PC-3 (cell line): ENCODE measurements at regions of chr13 and their contacts with region 1.

Region 1: DNA sequence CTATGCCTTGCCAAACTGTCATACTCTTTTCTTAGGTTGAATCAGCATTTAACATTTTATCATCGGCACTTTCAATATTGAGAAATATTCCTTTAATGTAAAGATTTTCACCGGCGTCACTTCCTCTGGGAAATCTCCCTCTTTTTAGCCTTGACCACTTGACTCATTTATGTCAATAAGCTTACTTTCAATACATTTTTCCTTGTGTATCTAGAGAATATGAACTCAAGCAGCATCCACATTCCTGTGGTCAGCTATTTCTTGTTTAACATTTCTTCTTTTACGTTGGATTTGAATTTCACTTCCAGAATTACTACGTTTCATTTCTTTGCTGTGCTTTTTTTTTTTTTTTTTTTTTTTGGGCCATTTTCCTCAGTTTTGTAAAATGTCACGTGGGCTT is 271.2 kb upstream of the HTR2A start:
- DNase-seq: peak; percentile 78
- ATAC-seq: peak; percentile 94
- H3K4me3 ChIP-seq: peak overlapping the region; percentile 63
- H3K27ac ChIP-seq: peak overlapping the region; percentile 95
- H3K4me1 ChIP-seq: peaks cover 21% of the 10 kb centered on the region
- H3K27me3 ChIP-seq: no peaks in the 10 kb centered on the region
- CTCF ChIP-seq: no peak

Region 2: GRCh38 chr13:46983881-46984280 is 184.2 kb before region 1 on chr13:
- CTCF ChIA-PET with region 1: no interaction called
- POLR2A ChIA-PET with region 1: no interaction called
- intact Hi-C with region 1: loop called (anchors 5 kb)
- DNase-seq: peak; percentile 84
- ATAC-seq: peak; percentile 100
- H3K4me3 ChIP-seq: no peak overlapping the region
- H3K27ac ChIP-seq: peak overlapping the region; percentile 90
- H3K4me1 ChIP-seq: peaks cover 21% of the 10 kb centered on the region
- H3K27me3 ChIP-seq: no peaks in the 10 kb centered on the region
- CTCF ChIP-seq: no peak

Region 3: DNA sequence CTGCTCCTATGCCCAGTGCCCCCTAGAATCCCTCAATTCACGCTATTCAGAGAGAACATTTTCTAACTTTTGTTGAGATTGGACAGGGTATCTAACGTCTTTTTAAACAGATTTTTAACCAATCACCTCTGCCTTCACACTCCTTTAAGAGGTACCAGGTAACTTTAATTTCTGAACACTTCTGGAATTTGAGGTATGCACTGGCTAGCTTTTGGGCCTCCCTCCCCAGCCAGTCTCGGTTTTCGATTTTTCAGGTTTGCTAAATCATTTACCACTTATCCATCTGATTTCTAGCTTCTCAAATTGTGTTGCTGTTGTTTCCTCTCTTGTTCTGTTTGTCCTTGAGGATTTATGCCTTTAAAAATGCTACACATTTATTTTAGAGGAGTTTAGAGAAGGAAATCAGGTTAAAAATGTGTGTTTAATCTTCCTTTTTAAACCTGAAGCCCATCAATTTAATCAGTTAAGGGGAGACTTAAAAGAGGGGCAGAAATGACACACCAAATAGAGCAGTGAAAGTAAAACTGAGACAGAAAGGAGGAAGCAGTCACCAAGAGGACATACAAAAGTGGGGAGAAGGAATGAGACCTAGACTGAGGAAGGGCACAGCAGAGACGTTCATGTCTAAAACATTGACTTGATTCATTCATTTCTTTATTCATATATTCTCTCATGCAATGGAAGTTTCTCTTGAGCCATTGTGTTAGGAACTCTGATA is 131.6 kb before region 1 on chr13:
- CTCF ChIA-PET with region 1: no interaction called
- POLR2A ChIA-PET with region 1: no interaction called
- intact Hi-C with region 1: loop called (anchors 10 kb)
- DNase-seq: no peak
- ATAC-seq: no peak
- H3K4me3 ChIP-seq: no peak overlapping the region
- H3K27ac ChIP-seq: no peak overlapping the region
- H3K4me1 ChIP-seq: peaks cover 34% of the 10 kb centered on the region
- H3K27me3 ChIP-seq: no peaks in the 10 kb centered on the region
- CTCF ChIP-seq: no peak

Region 4: DNA sequence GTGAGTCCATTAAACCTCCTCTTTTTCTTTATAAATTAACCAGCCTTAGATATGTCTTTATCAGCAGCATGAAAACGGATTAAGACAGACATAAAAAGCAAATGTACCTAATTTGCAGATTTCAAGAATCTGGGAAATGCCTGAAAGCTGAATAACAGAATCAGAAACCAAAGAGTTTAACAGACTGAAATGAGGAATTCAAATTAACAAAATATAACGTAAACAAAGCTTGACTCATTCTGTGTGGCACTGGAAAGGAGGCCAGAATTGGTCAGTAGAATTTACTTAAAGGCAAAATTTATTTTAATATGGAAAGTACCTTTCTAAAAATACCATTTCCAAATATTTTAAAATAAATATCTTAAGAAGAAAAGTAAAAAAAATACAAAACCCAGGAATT is 269.3 kb after region 1 on chr13:
- CTCF ChIA-PET with region 1: no interaction called
- POLR2A ChIA-PET with region 1: interaction called, 25 read pairs
- intact Hi-C with region 1: no loop called
- DNase-seq: no peak
- ATAC-seq: no peak
- H3K4me3 ChIP-seq: no peak overlapping the region
- H3K27ac ChIP-seq: no peak overlapping the region
- H3K4me1 ChIP-seq: no peaks in the 10 kb centered on the region
- H3K27me3 ChIP-seq: no peaks in the 10 kb centered on the region
- CTCF ChIP-seq: no peak